PC-9 (cell line): ENCODE measurements at regions of chr4 and their contacts with region 1.

Region 1: DNA sequence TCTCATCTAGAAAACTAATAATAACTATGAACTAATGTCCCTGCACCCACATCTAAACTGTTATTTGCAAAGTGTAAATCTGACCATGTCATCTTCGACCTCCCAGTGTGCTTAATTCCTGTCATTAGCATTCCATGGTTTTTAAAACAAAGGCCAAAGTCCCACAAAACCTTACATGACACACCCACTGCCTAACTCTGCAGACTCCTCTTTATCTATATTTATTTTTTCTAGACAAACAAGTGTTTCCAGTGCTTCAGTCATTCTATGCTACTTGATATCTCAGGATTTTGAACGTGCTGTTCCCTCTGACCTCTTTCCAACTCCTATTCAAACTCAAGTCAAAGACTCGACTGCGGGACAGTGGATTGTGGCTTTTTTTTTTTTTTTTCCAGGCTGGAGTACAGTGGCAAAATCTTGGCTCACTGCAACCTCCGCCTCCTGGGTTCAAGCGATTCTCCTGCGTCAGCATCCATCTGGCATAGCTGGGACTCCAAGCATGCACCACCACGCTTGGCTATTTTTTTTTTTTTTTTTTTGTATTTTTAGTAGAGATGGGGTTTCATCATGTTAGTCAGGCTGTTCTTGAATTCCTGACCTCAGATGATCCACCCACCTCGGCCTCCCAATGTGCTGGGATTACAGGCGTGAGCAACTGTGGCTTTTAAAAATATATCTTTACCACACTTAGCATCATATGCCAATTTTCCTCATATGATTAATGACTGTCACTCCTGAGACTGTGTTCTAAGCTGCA is 1511.0 kb downstream of the ARAP2 start:
- DNase-seq: peak; percentile 7 to 51
- H3K4me3 ChIP-seq: no peak overlapping the region
- H3K27ac ChIP-seq: no peak overlapping the region
- H3K4me1 ChIP-seq: peaks cover 6% of the 10 kb centered on the region; the same call in 1 of the 2 replicates
- H3K27me3 ChIP-seq: no peaks in the 10 kb centered on the region
- CTCF ChIP-seq: no peak

Region 2: DNA sequence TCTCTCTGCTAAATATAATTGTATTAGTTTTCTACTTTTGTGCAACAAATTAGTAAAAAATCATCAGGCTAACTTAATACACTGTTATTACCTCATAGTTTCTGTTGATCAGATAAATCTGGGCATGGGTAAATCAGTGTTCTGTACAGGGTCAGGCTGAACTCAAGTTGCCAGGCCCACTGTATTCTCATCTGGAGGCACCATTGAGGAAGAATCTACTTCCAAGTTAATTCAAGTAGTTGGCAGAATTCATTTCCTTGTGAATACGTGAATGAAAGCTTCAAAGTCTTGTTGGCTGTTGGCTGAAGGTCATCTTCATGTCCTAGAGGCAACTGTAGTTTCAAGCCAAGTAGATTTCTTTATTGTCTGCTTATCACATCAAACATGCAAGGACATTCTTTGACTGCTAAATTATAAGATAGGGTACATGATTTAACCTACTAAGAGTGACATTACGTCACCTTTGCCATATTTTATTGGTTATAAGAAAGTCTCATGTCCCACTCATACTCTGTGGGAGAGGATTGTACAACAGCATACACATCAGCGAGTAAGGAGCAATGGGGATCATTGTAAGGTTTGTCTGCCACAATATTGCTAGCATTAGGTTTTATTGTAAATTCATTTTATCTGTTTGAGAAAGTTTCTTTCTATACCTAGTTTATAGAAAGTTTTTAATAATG is 291.9 kb after region 1 on chr4:
- CTCF ChIA-PET with region 1: no interaction called
- POLR2A ChIA-PET with region 1: no interaction called
- intact Hi-C with region 1: loop called (anchors 5 kb)
- DNase-seq: no peak
- H3K4me3 ChIP-seq: no peak overlapping the region
- H3K27ac ChIP-seq: no peak overlapping the region
- H3K4me1 ChIP-seq: no peaks in the 10 kb centered on the region
- H3K27me3 ChIP-seq: no peaks in the 10 kb centered on the region
- CTCF ChIP-seq: no peak